ENCODE measurements at regions of chr2 and their contacts with region 1.

Region 1: DNA sequence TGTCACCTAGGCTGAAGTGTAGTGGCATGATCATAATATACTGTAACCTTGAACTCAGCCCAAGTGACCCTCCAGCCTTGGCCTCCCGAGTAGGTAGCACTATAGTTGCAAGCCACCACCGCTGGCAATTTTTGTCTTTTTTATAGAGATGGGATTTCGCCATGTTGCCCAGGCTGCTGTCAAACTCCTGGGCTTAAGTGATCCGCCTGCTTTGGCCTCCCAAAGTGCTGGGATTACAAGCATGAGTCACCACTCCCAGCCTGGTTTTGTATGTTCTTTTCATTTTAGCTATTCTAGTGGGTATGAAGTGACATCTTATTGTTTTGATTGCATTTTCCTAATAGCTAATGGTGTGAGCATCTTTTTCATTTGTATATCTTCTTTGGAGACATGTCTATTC is 11.3 kb upstream of the EXOC6B start:
- DNase-seq: no peak
- H3K4me3 ChIP-seq: no peak overlapping the region
- H3K27ac ChIP-seq: no peak overlapping the region
- H3K4me1 ChIP-seq: no peaks in the 10 kb centered on the region
- H3K27me3 ChIP-seq: no peaks in the 10 kb centered on the region
- CTCF ChIP-seq: no peak

Region 2: DNA sequence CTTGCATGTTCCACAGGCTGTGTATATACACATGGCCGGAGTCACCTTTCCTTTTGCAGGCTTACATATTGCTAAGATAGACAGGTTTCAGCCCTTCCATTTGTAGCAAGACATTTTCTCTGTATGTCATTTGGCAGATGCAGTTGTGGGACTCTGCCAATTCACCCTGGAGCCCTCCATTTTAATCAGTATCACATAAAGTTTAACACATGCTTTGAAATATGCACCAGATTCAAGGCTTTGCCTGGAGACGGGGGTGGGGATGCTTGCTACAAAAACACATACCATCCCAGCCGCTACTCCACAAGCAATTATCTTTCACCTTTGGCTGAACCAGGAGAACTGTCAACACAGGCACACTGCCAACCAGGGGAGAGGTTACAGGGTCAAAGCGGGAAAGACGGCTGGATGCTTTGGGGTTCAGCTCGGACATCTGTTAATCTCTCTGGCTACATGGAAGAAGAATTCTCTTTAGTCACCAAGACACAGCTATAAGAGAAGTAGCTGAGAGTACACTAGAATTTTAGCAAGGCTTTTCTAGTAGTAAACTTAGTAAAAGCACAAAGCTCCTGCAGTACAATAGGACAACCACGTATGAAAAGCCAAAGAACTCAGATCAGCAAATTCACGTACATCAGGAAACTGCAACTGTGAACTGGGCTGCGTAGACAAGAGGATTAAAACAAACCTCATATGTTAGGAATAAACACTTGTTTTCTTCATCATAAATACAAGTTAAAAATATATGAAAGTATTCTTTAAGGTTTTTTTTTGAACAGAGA is 142.3 kb before region 1 on chr2:
- CTCF ChIA-PET with region 1: interaction called, 12 read pairs
- dilution Hi-C with region 1: no loop called
- in situ Hi-C with region 1: no loop called
- intact Hi-C with region 1: no loop called
- DNase-seq: no peak
- H3K4me3 ChIP-seq: no peak overlapping the region
- H3K27ac ChIP-seq: no peak overlapping the region
- H3K4me1 ChIP-seq: peaks cover under 1% of the 10 kb centered on the region
- H3K27me3 ChIP-seq: no peaks in the 10 kb centered on the region
- CTCF ChIP-seq: no peak

Region 3: DNA sequence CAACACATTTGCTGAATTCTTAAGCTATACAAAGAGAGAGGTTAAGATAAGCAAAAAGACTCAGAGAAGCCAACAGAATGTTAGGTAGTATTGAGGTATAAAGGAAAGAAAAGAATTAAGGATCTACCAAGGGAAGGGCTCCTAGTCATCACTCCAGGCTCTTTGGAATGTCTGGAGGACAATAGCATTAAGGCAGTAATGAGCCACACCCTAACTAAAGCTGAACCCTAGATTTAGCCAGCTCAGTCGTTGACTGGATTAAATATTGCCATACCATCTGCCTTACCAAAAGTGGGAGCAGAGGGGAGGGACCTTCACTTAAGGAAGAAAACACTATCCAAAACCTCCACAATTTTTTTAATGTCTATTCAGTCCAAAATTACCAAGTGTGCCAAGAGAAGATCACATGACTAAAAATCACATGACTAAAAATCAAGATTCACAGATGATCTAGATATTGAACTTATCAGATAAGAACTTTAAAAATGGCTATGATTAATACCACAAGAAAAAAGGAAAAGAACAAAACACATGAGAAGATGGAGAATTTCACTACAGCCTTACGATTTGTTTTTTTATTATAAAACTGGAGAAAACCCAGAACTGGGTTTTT is 71.1 kb before region 1 on chr2:
- CTCF ChIA-PET with region 1: no interaction called
- dilution Hi-C with region 1: no loop called
- in situ Hi-C with region 1: no loop called
- intact Hi-C with region 1: no loop called
- DNase-seq: peak; percentile 52
- H3K4me3 ChIP-seq: no peak overlapping the region
- H3K27ac ChIP-seq: peak overlapping the region; percentile 92
- H3K4me1 ChIP-seq: peaks cover 15% of the 10 kb centered on the region
- H3K27me3 ChIP-seq: no peaks in the 10 kb centered on the region
- CTCF ChIP-seq: no peak

Region 4: GRCh38 chr2:73142937-73143336 is 305.8 kb after region 1 on chr2:
- CTCF ChIA-PET with region 1: no interaction called
- dilution Hi-C with region 1: no loop called
- in situ Hi-C with region 1: no loop called
- intact Hi-C with region 1: no loop called
- DNase-seq: no peak
- H3K4me3 ChIP-seq: no peak overlapping the region
- H3K27ac ChIP-seq: no peak overlapping the region
- H3K4me1 ChIP-seq: no peaks in the 10 kb centered on the region
- H3K27me3 ChIP-seq: no peaks in the 10 kb centered on the region
- CTCF ChIP-seq: no peak

Region 5: DNA sequence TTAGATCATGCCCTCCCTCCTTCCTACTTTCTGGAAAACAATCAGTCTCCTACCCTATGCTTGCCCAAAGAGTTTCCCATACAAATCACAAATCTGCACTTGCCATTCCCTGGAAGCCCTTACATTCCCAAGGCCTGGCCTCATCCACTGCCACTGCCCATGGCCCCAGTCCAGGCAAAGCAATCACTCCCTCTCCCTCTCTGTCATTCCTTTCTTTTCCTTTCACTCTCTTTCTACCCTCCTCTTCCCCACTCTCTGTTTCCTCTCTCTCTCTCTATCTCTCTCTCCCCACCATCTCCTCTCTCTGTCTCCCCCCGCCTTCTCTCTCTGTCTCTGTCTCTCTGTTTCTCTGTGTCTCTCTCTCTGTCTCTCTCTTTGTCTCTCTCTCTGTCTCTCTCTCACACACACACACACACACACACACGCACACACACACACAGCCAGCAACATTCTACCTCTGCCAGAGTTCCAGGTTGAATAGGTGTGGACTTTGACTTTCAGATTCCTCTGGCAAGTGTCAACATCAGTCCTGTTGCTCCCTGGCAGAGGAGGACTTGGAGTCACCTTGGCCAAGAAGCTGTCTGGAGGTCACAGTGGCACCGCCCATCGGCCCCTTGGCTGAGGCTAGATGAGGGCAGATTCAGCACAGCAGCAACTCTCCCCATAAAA is 848.7 kb after region 1 on chr2:
- CTCF ChIA-PET with region 1: no interaction called
- dilution Hi-C with region 1: no loop called
- in situ Hi-C with region 1: no loop called
- intact Hi-C with region 1: no loop called
- DNase-seq: no peak
- H3K4me3 ChIP-seq: no peak overlapping the region
- H3K27ac ChIP-seq: no peak overlapping the region
- H3K4me1 ChIP-seq: no peaks in the 10 kb centered on the region
- H3K27me3 ChIP-seq: peaks cover 2% of the 10 kb centered on the region
- CTCF ChIP-seq: no peak